ENCODE measurements at regions of chr1 and their contacts with region 1.

Region 1: GRCh38 chr1:111030590-111030989 is 66.9 kb upstream of the LRIF1 start:
- DNase-seq: peak; percentile 54 to 62 (median 59)
- H3K4me3 ChIP-seq: no peak overlapping the region
- H3K4me3 Mint-ChIP-seq: no peak overlapping the region
- H3K27ac ChIP-seq: no peak overlapping the region
- H3K27ac Mint-ChIP-seq: no peak overlapping the region
- H3K4me1 ChIP-seq: no peaks in the 10 kb centered on the region
- H3K4me1 Mint-ChIP-seq: no peaks in the 10 kb centered on the region
- H3K27me3 ChIP-seq: no peaks in the 10 kb centered on the region
- H3K27me3 Mint-ChIP-seq: peaks cover 5 to 12% of the 10 kb centered on the region in 2 donors

Region 2: DNA sequence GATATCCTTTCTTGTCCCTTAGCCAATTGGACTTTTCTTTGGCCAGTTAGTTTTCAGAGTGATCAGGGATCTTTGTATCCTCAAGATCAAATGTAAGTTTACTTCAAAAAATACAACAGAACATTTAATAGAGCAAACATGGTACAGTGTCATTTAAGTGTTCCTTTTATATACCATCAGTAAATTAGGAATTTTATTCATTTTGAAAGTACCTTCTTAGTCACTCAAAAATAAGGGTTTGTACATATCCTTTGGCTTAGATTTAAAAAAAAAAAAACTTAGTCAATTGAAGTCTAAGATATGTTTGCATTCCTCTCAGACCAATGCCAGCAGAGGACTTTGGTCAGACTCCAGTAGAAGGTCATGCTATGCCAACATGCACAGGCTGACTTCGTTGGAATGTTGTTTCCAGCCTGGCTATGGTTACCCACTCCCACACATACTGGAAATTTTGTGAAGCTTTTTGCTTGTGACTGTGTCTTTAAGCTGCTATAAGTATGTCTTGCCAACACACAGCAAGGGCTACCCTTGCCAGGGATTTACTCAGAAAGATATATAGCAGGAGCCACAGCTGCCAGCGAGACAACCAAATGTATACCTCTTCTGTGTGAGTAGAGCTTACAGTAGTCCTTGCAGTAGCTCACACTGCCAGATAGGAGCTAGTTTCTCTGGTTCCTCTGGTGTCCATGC is 14.6 kb after region 1 on chr1:
- CTCF ChIA-PET with region 1: interaction called, 20 read pairs
- POLR2A ChIA-PET with region 1: no interaction called
- intact Hi-C with region 1: no loop called
- DNase-seq: no peak
- H3K4me3 ChIP-seq: no peak overlapping the region
- H3K4me3 Mint-ChIP-seq: no peak overlapping the region
- H3K27ac ChIP-seq: no peak overlapping the region
- H3K27ac Mint-ChIP-seq: no peak overlapping the region
- H3K4me1 ChIP-seq: no peaks in the 10 kb centered on the region
- H3K4me1 Mint-ChIP-seq: no peaks in the 10 kb centered on the region
- H3K27me3 ChIP-seq: no peaks in the 10 kb centered on the region
- H3K27me3 Mint-ChIP-seq: peaks cover 0 to 10% of the 10 kb centered on the region in 2 donors

Region 3: DNA sequence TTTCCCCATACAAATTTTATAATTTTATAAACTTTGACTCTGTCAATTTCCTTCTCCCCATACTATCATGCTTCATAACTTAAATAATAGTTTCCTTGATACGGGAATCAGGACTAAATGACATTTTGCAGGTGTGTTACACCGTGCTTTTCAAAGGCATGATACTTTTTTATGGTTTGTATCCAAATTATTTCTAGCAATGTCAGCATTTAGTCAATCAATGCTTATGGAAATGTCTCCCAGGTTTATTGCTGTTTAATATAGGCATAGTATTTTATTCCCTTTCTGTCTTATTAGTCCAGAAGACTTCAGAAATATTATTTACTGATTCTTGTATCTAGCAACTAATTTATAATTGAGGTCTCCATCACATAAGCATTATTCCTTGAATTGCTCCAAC is 85.9 kb after region 1 on chr1:
- CTCF ChIA-PET with region 1: no interaction called
- POLR2A ChIA-PET with region 1: no interaction called
- intact Hi-C with region 1: no loop called
- DNase-seq: no peak
- H3K4me3 ChIP-seq: no peak overlapping the region
- H3K4me3 Mint-ChIP-seq: no peak overlapping the region
- H3K27ac ChIP-seq: no peak overlapping the region
- H3K27ac Mint-ChIP-seq: no peak overlapping the region
- H3K4me1 ChIP-seq: no peaks in the 10 kb centered on the region
- H3K4me1 Mint-ChIP-seq: no peaks in the 10 kb centered on the region
- H3K27me3 ChIP-seq: no peaks in the 10 kb centered on the region
- H3K27me3 Mint-ChIP-seq: no peaks in the 10 kb centered on the region

Region 4: DNA sequence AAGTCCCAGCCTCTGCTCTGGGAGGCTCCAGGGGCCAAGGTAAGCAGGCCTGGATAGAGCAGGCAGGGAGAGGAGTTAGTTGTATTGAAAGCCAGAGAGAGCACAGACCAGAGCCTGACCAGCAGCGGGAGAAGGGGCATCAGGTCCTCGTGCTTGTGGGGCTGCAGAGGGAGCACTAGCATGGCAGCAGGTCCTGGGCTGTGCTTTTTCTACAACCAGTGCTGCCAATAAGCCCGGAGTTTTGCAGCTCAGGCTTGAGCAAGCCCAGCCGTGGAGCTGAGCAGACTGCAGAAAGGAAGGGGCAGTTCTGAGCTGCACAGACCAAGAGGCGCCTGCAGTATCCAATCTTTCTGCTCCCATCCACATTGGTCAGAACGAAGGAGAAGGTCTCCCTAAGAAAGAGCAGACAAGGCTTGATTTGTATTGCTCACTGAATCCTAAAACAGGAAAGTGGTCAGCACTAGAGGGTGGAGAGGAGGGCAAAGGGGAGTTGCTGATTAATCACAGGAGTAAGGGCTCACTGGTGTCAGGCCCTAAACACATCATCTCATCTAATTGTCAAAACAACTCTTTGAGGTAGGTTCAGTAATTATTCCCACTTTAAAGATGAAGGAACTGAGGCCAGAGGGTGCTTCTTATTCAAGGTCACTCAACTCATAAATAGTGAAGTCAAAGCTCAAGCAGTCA is 167.2 kb after region 1 on chr1:
- CTCF ChIA-PET with region 1: interaction called, 11 read pairs
- POLR2A ChIA-PET with region 1: no interaction called
- intact Hi-C with region 1: no loop called
- DNase-seq: peak; percentile 58 to 78 (median 73)
- H3K4me3 ChIP-seq: peak overlapping the region; percentile 87 to 90
- H3K4me3 Mint-ChIP-seq: peak overlapping the region; percentile 99 to 100 (median 100)
- H3K27ac ChIP-seq: peak overlapping the region; percentile 84
- H3K27ac Mint-ChIP-seq: peak overlapping the region; percentile 92 to 98 (median 97)
- H3K4me1 ChIP-seq: peaks cover 78% of the 10 kb centered on the region
- H3K4me1 Mint-ChIP-seq: peaks cover 61 to 96% (median 71%) of the 10 kb centered on the region in 4 donors
- H3K27me3 ChIP-seq: no peaks in the 10 kb centered on the region
- H3K27me3 Mint-ChIP-seq: no peaks in the 10 kb centered on the region

Region 5: DNA sequence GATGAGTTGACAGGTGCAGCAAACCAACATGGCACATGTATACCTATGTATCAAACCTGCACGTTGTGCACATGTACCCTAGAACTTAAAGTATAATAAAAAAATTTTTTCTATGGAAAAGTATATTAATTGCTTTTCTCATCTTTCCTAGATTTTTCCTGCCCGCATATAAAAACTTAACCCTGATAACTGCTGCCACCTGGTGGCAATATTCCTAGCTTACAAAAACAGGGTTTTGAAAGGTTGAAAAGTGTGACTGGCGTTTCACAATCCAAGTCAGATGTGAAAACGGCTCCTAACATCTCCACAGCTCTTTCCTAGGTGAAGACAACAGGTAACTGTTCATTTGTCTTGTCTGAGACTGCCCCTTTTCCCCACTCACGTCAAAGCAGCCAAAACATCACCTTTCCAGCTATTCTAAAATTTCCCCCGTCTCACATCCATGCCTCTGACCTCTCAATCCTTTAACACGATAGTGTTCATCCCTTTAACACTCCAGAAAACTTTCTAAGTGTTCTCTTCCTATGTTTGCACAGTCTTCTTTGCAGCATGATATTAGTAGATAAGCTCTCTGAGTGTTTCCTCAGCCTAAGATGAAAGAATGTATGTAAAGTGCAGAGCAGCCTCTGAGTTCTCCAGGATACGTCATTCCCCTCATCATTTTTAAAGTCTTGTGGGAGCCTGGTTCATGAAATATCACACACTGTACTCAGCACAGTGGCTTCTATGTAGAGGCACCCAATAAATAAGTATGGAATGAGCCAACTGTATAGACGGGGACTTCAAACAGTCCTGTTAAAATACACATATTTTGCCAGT is 369.4 kb after region 1 on chr1:
- CTCF ChIA-PET with region 1: interaction called, 40 read pairs
- POLR2A ChIA-PET with region 1: no interaction called
- intact Hi-C with region 1: loop called (anchors 1 kb)
- DNase-seq: peak in 4 of 5 donors; percentile 27 to 39 (median 33)
- H3K4me3 ChIP-seq: no peak overlapping the region
- H3K4me3 Mint-ChIP-seq: peak overlapping the region in 1 of 8 donors; percentile 18
- H3K27ac ChIP-seq: no peak overlapping the region
- H3K27ac Mint-ChIP-seq: peak overlapping the region in 4 of 7 donors; percentile 18 to 55 (median 34)
- H3K4me1 ChIP-seq: peaks cover 6% of the 10 kb centered on the region
- H3K4me1 Mint-ChIP-seq: peaks cover 7 to 18% (median 13%) of the 10 kb centered on the region in 4 donors
- H3K27me3 ChIP-seq: no peaks in the 10 kb centered on the region
- H3K27me3 Mint-ChIP-seq: no peaks in the 10 kb centered on the region

Measured in CD4-positive, alpha-beta memory T cell (primary cell).